ENCODE measurements at regions of chr6 and their contacts with region 1.

Region 1: DNA sequence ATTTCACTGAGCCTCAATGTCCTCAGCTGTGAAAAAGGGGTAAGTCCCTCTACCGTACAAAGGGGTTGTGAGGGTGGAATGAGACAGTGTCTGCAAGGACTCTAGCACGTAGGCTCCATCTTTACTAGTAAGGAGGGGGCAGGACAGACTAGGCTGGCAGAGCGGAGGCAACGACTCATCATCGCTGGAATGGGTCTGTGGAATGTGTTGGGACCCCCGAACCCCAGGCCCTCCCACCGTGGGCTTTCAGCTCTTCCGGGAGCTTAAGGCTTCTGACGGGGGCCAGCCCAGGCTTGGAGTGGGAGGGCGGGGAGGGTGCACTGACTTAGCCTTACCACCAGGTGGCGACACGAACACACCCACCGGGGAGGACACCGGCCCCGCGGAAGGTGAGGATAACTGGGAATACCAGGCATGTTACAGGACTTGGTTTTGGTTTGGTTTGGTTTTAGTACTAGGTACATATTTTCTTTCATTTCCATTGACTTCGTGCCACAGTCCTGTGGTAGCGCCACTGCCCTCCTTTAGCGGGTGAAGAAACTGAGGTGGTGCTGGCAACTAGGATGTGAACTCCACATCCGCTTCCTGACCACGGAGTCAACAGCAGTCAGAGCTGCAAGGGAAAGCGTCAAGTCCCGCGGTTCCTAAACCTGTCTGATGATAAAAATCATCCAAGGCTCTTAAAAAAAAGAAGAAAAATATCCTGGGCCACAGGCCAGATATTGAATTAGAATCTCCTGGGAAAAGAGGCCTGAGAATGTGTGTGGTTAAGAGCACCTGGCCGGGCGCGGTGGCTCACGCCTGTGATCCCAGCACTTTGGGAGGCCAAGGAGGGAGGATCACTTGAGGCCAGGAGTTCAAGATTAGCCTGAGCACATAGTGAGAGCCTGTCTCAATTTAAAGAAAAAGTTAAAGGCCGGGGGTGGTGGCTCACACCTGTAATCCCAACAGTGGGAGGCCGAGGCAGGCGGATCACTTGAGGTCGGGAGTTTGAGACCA is 10.3 kb upstream of the TULP1 start:
- DNase-seq: peak; percentile 89
- H3K4me3 Mint-ChIP-seq: peak overlapping the region; percentile 73
- H3K27ac Mint-ChIP-seq: peak overlapping the region; percentile 64
- H3K4me1 Mint-ChIP-seq: peaks cover 16% of the 10 kb centered on the region
- H3K27me3 Mint-ChIP-seq: peaks cover 5% of the 10 kb centered on the region

Region 2: GRCh38 chr6:35402136-35402855 is 120.7 kb before region 1 on chr6:
- intact Hi-C with region 1: no loop called
- DNase-seq: no peak
- H3K4me3 Mint-ChIP-seq: no peak overlapping the region
- H3K27ac Mint-ChIP-seq: no peak overlapping the region
- H3K4me1 Mint-ChIP-seq: peaks cover 18% of the 10 kb centered on the region
- H3K27me3 Mint-ChIP-seq: no peaks in the 10 kb centered on the region

Region 3: DNA sequence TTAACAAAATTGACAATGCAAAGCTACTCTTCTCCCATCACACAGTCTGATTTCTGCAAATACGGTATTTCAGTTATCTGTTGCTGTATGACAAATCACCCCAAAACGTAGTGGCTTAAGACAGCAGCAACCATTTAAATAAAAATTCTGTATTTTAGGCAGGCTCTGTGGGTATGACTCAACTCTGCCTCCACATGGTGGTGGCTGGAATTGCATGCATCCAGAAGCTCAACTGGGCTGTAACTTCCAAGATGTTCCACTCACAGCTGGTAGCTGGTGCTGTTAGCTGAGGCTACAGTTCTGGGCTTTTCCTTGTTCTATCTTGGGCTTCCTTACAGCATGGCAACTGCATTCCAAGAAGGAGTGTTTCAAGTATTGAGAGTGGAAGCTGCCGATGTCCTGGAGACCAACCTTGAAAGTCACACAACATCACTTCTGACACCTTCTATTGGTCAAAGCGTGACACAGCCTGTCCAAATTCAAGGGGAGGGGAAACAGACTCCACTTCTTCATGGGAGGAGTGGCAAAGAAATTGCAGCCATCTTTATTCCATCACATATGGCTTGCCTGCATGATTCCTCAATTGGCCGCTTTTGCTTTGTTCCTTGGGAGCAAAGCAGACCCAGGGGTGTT is 29.4 kb after region 1 on chr6:
- intact Hi-C with region 1: loop called (anchors 1 kb)
- DNase-seq: peak; percentile 88
- H3K4me3 Mint-ChIP-seq: no peak overlapping the region
- H3K27ac Mint-ChIP-seq: no peak overlapping the region
- H3K4me1 Mint-ChIP-seq: no peaks in the 10 kb centered on the region
- H3K27me3 Mint-ChIP-seq: peaks cover 12% of the 10 kb centered on the region

Region 4: GRCh38 chr6:35737413-35738211 is 214.7 kb after region 1 on chr6:
- intact Hi-C with region 1: loop called (anchors 1 kb)
- DNase-seq: peak; percentile 80
- H3K4me3 Mint-ChIP-seq: no peak overlapping the region
- H3K27ac Mint-ChIP-seq: peak overlapping the region; percentile 27
- H3K4me1 Mint-ChIP-seq: peaks cover 23% of the 10 kb centered on the region
- H3K27me3 Mint-ChIP-seq: no peaks in the 10 kb centered on the region

Measured in activated CD4-positive, alpha-beta T cell treated with anti-CD3 and anti-CD28 coated beads, Interleukin-2, amount 10 ng/mL, durations not matched to agents 24 days and 14 days (primary cell).